GM12878 (cell line): ENCODE measurements at regions of chr3 and their contacts with region 1.

Region 1: GRCh38 chr3:27134165-27134796 is 234.9 kb downstream of the NEK10 start:
- DNase-seq: peak; percentile 8
- ATAC-seq: peak; percentile 97
- H3K4me3 ChIP-seq: no peak overlapping the region
- H3K27ac ChIP-seq: no peak overlapping the region
- H3K4me1 ChIP-seq: no peaks in the 10 kb centered on the region
- H3K27me3 ChIP-seq: no peaks in the 10 kb centered on the region
- CTCF ChIP-seq: peak; percentile 85 to 90 (median 90)
- EP300 ChIP-seq: no peak
- POLR2A ChIP-seq: no peak
- RAD21 ChIP-seq: peak; percentile 92

Region 2: DNA sequence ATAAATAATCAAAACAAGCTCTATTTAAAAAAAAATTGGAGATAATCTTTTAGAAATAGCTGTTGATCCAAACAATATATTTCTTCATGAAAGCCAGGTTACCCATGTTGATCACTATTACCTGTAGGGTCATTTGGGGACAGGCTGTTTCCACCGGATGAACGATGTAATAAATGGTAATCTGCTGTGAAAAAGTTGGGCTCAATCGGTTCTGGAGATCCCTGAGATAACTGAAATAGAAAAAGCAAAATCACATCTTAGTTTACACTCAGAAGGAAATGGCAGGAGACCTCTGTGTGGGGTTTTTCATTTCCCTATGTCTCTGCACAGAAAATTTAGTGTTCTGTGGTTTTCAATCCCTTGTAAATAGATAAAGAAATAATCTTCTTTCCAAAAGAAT is 14.6 kb before region 1 on chr3:
- CTCF ChIA-PET with region 1: interaction called, 13 read pairs
- POLR2A ChIA-PET with region 1: no interaction called
- RAD21 ChIA-PET with region 1: no interaction called
- SMC1A ChIA-PET with region 1: interaction called, 4 read pairs
- in situ Hi-C with region 1: no loop called
- intact Hi-C with region 1: no loop called
- DNase-seq: no peak
- ATAC-seq: no peak
- H3K4me3 ChIP-seq: no peak overlapping the region
- H3K27ac ChIP-seq: no peak overlapping the region
- H3K4me1 ChIP-seq: no peaks in the 10 kb centered on the region
- H3K27me3 ChIP-seq: no peaks in the 10 kb centered on the region; a peak in 1 of 4 replicates
- CTCF ChIP-seq: no peak
- EP300 ChIP-seq: no peak
- POLR2A ChIP-seq: no peak
- RAD21 ChIP-seq: no peak

Region 3: DNA sequence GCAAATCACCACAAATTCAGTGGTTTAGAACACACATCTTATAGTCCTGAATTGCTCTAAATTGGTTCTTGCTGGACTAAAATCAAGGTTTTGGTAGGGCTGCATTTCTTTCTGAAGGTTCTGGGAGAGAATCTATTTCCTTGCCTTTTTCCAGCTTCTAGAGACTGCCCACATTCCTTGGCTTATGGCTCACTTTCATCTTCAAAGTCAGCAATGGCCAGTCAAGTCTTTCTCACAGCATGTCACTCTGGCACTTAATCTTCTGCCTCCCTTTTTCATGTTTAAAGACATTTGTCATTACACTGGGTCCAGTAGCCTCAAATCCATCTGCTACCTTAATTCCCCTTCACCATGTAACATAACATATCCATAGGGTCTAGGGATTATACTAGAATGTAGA is 85.9 kb after region 1 on chr3:
- CTCF ChIA-PET with region 1: no interaction called
- POLR2A ChIA-PET with region 1: no interaction called
- RAD21 ChIA-PET with region 1: no interaction called
- SMC1A ChIA-PET with region 1: no interaction called
- in situ Hi-C with region 1: no loop called
- intact Hi-C with region 1: no loop called
- DNase-seq: no peak
- ATAC-seq: no peak
- H3K4me3 ChIP-seq: no peak overlapping the region
- H3K27ac ChIP-seq: no peak overlapping the region
- H3K4me1 ChIP-seq: no peaks in the 10 kb centered on the region
- H3K27me3 ChIP-seq: no peaks in the 10 kb centered on the region
- CTCF ChIP-seq: no peak
- EP300 ChIP-seq: no peak
- POLR2A ChIP-seq: no peak
- RAD21 ChIP-seq: no peak

Region 4: DNA sequence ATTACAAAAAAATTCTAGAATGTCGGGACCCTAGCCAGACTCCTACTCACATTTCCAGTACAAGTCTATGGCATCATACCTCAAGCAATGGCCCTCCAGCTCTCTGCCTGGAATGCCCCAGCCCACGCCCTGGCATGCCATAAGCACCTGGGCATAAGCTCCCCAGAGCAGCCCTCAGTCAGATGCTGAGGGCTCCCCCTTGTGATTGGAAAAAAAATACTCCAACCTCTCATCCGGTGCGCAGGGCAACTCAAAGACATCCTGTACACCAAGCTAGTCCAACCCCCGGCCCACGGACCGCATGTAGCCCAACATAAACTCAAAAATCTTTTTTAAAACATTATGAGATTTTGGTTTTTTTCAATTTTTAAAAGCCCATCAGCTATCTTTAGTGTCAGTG is 119.5 kb after region 1 on chr3:
- CTCF ChIA-PET with region 1: interaction called, 67 read pairs
- POLR2A ChIA-PET with region 1: no interaction called
- RAD21 ChIA-PET with region 1: interaction called, 25 read pairs
- SMC1A ChIA-PET with region 1: interaction called, 27 read pairs
- in situ Hi-C with region 1: no loop called
- intact Hi-C with region 1: loop called (anchors 1 kb)
- DNase-seq: peak; percentile 1
- ATAC-seq: peak; percentile 97
- H3K4me3 ChIP-seq: no peak overlapping the region
- H3K27ac ChIP-seq: no peak overlapping the region
- H3K4me1 ChIP-seq: no peaks in the 10 kb centered on the region
- H3K27me3 ChIP-seq: no peaks in the 10 kb centered on the region
- CTCF ChIP-seq: peak; percentile 45 to 54 (median 52); a peak in 5 of 6 replicates
- EP300 ChIP-seq: no peak
- POLR2A ChIP-seq: no peak
- RAD21 ChIP-seq: peak; percentile 65

Region 5: GRCh38 chr3:27659279-27660021 is 525.2 kb after region 1 on chr3:
- CTCF ChIA-PET with region 1: no interaction called
- POLR2A ChIA-PET with region 1: no interaction called
- RAD21 ChIA-PET with region 1: no interaction called
- SMC1A ChIA-PET with region 1: no interaction called
- in situ Hi-C with region 1: loop called (anchors 25 kb)
- intact Hi-C with region 1: no loop called
- DNase-seq: no peak
- ATAC-seq: peak; percentile 85
- H3K4me3 ChIP-seq: no peak overlapping the region
- H3K27ac ChIP-seq: no peak overlapping the region
- H3K4me1 ChIP-seq: no peaks in the 10 kb centered on the region
- H3K27me3 ChIP-seq: no peaks in the 10 kb centered on the region
- CTCF ChIP-seq: peak; percentile 69 to 86 (median 80)
- EP300 ChIP-seq: no peak
- POLR2A ChIP-seq: no peak
- RAD21 ChIP-seq: peak; percentile 55

Region 6: DNA sequence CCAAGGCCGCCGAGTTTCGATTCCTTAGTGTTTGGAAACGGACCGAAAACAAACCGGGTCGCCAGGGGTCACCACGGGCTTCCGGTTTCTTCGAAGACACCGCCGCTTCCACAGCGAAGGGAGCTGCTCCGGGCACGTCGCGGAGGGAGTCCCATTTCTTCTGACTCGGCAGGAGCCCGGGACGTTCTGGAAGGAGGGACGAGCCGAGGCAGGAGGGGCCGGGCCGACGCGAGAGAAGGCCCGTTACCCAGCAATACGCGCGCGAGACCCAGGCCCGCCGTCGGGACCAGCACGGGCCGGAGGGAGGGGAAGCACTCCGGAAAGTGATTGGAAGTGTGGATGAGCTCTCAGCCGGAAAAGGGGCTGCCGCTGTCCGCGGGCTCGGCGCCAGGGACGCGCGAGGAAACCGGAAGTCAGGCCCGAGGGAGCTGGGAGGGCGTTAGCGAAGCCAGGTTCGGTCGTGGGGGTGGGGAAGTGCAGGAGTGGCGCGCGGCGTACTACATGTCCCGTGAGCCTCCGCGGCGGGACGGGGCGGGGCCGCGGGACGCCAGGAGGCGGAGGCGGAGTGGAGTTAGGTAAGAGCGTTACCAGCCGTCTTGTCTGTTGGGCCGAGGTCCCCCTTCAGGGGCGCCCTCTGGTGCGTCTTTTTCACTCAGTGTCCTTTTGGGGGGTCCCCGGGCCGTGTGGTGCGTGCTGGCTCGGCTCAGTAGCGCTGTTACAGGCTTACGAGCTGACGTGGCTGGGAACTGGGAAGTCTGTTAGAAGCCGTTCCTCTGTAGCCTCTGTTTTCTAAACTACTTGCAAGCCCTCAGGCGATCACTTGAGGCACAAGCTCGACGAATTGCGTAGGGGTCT is 1214.6 kb after region 1 on chr3 and contains the starts of genes AZI2 and ZCWPW2:
- CTCF ChIA-PET with region 1: no interaction called
- POLR2A ChIA-PET with region 1: no interaction called
- RAD21 ChIA-PET with region 1: no interaction called
- SMC1A ChIA-PET with region 1: no interaction called
- in situ Hi-C with region 1: loop called (anchors 25 kb)
- intact Hi-C with region 1: no loop called
- DNase-seq: peak; percentile 74
- ATAC-seq: peak; percentile 92
- H3K4me3 ChIP-seq: peak within 1 kb of the TSS; percentile 81
- H3K27ac ChIP-seq: peak within 1 kb of the TSS; percentile 97
- H3K4me1 ChIP-seq: no peaks in the 10 kb centered on the region
- H3K27me3 ChIP-seq: no peaks in the 10 kb centered on the region
- CTCF ChIP-seq: peak; percentile 20 to 43 (median 23); a peak in 4 of 6 replicates
- EP300 ChIP-seq: peak in 1 of 2 experiments; percentile 53; a peak in 1 of 4 replicates
- POLR2A ChIP-seq: peak; percentile 88
- RAD21 ChIP-seq: no peak
- polyA plus RNA-seq, gene AZI2: 33.4 to 36.2 TPM
- polyA plus RNA-seq, gene ZCWPW2: 0.31 to 0.37 TPM